Stomach (tissue), 19 donors: ENCODE measurements at regions of chr11 and their contacts with region 1.

Region 1: GRCh38 chr11:120169981-120170698 is 32.2 kb upstream of the TRIM29 start:
- DNase-seq: peak in 1 of 2 donors; percentile 38
- H3K4me3 ChIP-seq: peak overlapping the region in 2 of 4 donors; percentile 46 to 59
- H3K27ac ChIP-seq: no peak overlapping the region
- H3K4me1 ChIP-seq: peaks cover 8 to 30% (median 28%) of the 10 kb centered on the region in 4 donors
- H3K27me3 ChIP-seq: peaks cover 0 to 68% (median 29%) of the 10 kb centered on the region in 3 donors
- CTCF ChIP-seq: no peak
- EP300 ChIP-seq: no peak
- POLR2A ChIP-seq: no peak

Region 2: GRCh38 chr11:119832202-119832935 is 337.8 kb before region 1 on chr11:
- intact Hi-C with region 1: no loop called
- DNase-seq: peak; percentile 65 to 87
- H3K4me3 ChIP-seq: no peak overlapping the region
- H3K27ac ChIP-seq: peak overlapping the region in 4 of 5 donors; percentile 9 to 58 (median 40)
- H3K4me1 ChIP-seq: peaks cover 0 to 16% (median 10%) of the 10 kb centered on the region in 4 donors
- H3K27me3 ChIP-seq: peaks cover 0 to 23% (median 0%) of the 10 kb centered on the region in 3 donors
- CTCF ChIP-seq: no peak
- EP300 ChIP-seq: no peak
- POLR2A ChIP-seq: no peak

Region 3: GRCh38 chr11:120235024-120235861 is 65.1 kb after region 1 on chr11:
- intact Hi-C with region 1: loop called (anchors 2 kb)
- DNase-seq: peak; percentile 84 to 90
- H3K4me3 ChIP-seq: no peak overlapping the region
- H3K27ac ChIP-seq: no peak overlapping the region
- H3K4me1 ChIP-seq: peaks cover 6 to 11% (median 7%) of the 10 kb centered on the region in 4 donors
- H3K27me3 ChIP-seq: peaks cover 0 to 44% (median 24%) of the 10 kb centered on the region in 3 donors
- CTCF ChIP-seq: peak in 6 of 7 experiments; percentile 54 to 84 (median 77)
- EP300 ChIP-seq: no peak
- POLR2A ChIP-seq: no peak

Region 4: DNA sequence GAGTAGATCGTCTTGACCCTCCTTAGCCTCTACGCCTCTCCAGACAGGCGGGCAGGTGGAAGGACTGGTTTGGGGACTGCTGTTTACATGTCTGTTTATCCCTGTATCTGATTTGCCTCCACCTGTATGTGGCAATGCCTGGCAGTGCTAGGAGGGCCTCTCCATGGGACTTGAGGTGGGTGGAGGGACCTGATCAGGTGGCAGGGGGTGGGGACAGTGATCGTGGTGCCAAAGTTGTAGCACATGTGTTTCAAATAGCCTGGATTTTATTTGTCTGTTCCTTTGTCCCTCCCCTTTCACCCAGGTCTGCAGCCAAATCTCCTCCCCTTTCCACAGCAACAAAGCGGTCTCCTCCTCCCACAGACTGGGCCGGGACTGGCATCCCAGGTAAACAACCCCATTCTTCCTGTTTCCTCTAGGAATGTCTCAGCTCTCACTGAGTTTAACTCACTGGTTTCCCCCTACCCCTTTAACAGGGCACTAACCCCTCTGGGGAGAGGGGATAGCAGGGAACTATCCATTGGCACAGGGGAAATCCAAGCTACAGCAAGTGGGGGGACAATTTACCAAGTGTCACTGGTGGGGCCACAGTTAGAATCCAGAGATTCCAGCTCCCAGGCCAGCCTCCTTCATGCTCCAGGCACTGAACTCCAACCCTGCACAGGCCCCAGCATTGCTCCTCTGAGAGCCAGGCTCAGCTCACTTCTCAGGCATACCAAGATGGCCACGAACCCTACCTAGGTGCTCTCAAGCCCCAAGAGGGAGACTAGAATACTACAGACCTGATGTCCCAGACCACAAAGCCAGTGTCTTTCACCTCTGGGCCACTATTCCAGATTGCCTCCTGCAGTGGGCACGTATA is 132.1 kb after region 1 on chr11:
- intact Hi-C with region 1: loop called (anchors 2 kb)
- DNase-seq: peak; percentile 83 to 86
- H3K4me3 ChIP-seq: no peak overlapping the region
- H3K27ac ChIP-seq: peak overlapping the region; percentile 9 to 75 (median 67)
- H3K4me1 ChIP-seq: peaks cover 3 to 30% (median 26%) of the 10 kb centered on the region in 4 donors
- H3K27me3 ChIP-seq: peaks cover 0 to 9% (median 3%) of the 10 kb centered on the region in 3 donors
- CTCF ChIP-seq: no peak
- EP300 ChIP-seq: no peak
- POLR2A ChIP-seq: no peak